ENCODE measurements at regions of chr10 and their contacts with region 1.

Region 1: GRCh38 chr10:75019370-75019769 is 92.1 kb upstream of the SAMD8 start:
- DNase-seq: no peak
- H3K4me3 ChIP-seq: no peak overlapping the region
- H3K27ac ChIP-seq: no peak overlapping the region
- H3K4me1 ChIP-seq: peaks cover 3% of the 10 kb centered on the region
- H3K27me3 ChIP-seq: no peaks in the 10 kb centered on the region
- CTCF ChIP-seq: no peak
- EP300 ChIP-seq: no peak
- POLR2A ChIP-seq: no peak

Region 2: GRCh38 chr10:74262856-74263255 is 756.5 kb before region 1 on chr10:
- intact Hi-C with region 1: loop called in 2 of 4 experiments (anchors 5 to 10 kb)
- DNase-seq: no peak
- H3K4me3 ChIP-seq: no peak overlapping the region
- H3K27ac ChIP-seq: no peak overlapping the region
- H3K4me1 ChIP-seq: peaks cover 2% of the 10 kb centered on the region
- H3K27me3 ChIP-seq: no peaks in the 10 kb centered on the region
- CTCF ChIP-seq: no peak
- EP300 ChIP-seq: no peak
- POLR2A ChIP-seq: no peak

Region 3: DNA sequence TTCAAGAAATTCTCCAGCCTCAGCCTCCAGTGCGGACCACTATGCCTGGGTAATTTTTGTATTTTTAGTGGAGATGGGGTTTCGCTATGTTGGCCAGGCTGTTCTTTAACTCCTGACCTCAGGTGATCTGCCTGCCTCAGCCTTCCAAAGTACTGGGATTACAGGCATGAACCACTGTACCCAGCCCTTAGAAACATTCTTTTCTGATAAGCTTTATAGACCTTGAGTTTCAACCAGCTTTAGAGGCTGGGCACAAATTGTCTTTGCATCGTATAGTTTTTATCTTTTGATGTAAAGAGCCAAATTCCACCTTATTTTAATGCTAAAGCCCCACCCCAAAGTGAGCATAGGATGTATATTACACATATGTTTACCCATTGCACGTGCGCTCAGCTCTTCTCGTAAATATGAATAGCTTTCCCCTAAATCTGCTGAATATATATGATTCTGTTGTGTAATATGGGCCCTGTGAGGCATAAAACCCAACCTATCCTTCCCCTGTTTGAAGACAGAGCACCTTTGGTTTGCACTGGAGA is 743.5 kb before region 1 on chr10:
- intact Hi-C with region 1: loop called in 1 of 4 experiments (anchors 10 kb)
- DNase-seq: no peak
- H3K4me3 ChIP-seq: no peak overlapping the region
- H3K27ac ChIP-seq: no peak overlapping the region
- H3K4me1 ChIP-seq: no peaks in the 10 kb centered on the region
- H3K27me3 ChIP-seq: no peaks in the 10 kb centered on the region
- CTCF ChIP-seq: no peak
- EP300 ChIP-seq: no peak
- POLR2A ChIP-seq: no peak

Region 4: GRCh38 chr10:74837743-74838142 is 181.6 kb before region 1 on chr10:
- intact Hi-C with region 1: loop called in 1 of 4 experiments (anchors 10 kb)
- DNase-seq: no peak
- H3K4me3 ChIP-seq: no peak overlapping the region
- H3K27ac ChIP-seq: peak overlapping the region in 1 of 2 donors; percentile 64
- H3K4me1 ChIP-seq: peaks cover 23% of the 10 kb centered on the region
- H3K27me3 ChIP-seq: no peaks in the 10 kb centered on the region
- CTCF ChIP-seq: no peak
- EP300 ChIP-seq: no peak
- POLR2A ChIP-seq: no peak

Region 5: GRCh38 chr10:74854610-74855009 is 164.8 kb before region 1 on chr10:
- intact Hi-C with region 1: loop called in 1 of 4 experiments (anchors 5 kb)
- DNase-seq: no peak
- H3K4me3 ChIP-seq: no peak overlapping the region
- H3K27ac ChIP-seq: no peak overlapping the region
- H3K4me1 ChIP-seq: peaks cover 14% of the 10 kb centered on the region
- H3K27me3 ChIP-seq: no peaks in the 10 kb centered on the region
- CTCF ChIP-seq: no peak
- EP300 ChIP-seq: no peak
- POLR2A ChIP-seq: no peak

Region 6: GRCh38 chr10:75165684-75166622 is 146.6 kb after region 1 on chr10:
- intact Hi-C with region 1: no loop called
- DNase-seq: no peak
- H3K4me3 ChIP-seq: no peak overlapping the region
- H3K27ac ChIP-seq: no peak overlapping the region
- H3K4me1 ChIP-seq: peaks cover 3% of the 10 kb centered on the region
- H3K27me3 ChIP-seq: no peaks in the 10 kb centered on the region
- CTCF ChIP-seq: no peak
- EP300 ChIP-seq: no peak
- POLR2A ChIP-seq: no peak

Region 7: GRCh38 chr10:75187961-75188426 is 168.6 kb after region 1 on chr10:
- intact Hi-C with region 1: no loop called
- DNase-seq: peak in 1 of 5 donors; percentile 46
- H3K4me3 ChIP-seq: no peak overlapping the region
- H3K27ac ChIP-seq: no peak overlapping the region
- H3K4me1 ChIP-seq: peaks cover 4% of the 10 kb centered on the region
- H3K27me3 ChIP-seq: no peaks in the 10 kb centered on the region
- CTCF ChIP-seq: peak; percentile 18 to 55 (median 40)
- EP300 ChIP-seq: no peak
- POLR2A ChIP-seq: no peak

Measured in ovary (tissue), 10 donors.